ENCODE measurements at regions of chr20 and their contacts with region 1.

Region 1: GRCh38 chr20:56554869-56555268 is 21.8 kb downstream of the FAM209B start:
- DNase-seq: peak in 5 of 10 donors; percentile 17 to 72 (median 25)

Region 2: DNA sequence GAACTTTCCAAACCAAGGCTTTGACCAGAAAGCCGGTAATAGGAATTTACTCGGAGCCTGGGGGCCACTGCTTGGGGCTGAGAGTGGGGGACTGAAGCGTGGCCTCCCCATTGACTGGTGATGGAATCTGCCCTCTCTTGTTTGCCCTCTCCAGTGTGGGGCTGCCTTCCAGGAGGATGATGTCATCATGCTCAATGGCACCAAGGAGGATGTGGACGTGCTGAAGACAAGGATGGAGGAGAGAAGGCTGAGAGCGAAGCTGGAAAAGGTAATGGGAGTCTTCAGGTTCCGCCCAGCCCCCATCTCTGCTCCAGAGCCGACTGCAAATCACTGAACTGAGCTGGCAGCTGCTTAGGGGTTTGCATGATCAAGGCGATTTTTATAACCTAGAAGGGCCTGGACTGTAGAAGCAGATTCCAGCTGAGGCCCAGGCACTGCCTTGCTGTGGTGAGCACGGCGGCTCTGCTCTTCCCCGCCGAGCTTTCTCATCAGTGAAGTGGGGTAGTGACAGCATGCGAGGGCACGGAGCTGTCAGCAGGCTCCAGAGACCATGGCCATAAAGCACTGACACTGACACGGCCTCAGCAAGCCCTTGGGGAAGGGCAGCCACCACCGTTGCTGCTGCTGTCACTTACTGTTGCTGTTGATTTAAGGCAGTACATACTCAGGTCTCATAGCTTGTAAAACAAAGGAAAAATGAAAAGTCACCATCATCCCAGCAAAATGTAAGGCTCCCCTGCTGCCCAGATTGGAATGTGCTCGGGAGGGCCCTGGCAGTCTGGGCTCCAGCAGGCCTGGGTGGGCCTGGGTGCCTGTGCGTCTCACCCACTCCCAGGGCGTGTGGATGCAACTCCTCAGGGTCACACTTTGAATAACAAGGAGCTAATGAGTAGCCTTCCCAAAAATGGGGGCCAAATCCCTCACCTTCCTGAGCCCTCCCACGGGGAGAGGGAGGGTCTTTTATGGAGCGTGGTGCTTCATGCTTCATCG is 41.4 kb before region 1 on chr20:
- intact Hi-C with region 1: no loop called
- DNase-seq: peak in 1 of 10 donors; percentile 73

Region 3: GRCh38 chr20:56974499-56975236 is 419.8 kb after region 1 on chr20:
- intact Hi-C with region 1: loop called (anchors 2 kb)
- DNase-seq: peak in 5 of 10 donors; percentile 28 to 46 (median 34)

Region 4: DNA sequence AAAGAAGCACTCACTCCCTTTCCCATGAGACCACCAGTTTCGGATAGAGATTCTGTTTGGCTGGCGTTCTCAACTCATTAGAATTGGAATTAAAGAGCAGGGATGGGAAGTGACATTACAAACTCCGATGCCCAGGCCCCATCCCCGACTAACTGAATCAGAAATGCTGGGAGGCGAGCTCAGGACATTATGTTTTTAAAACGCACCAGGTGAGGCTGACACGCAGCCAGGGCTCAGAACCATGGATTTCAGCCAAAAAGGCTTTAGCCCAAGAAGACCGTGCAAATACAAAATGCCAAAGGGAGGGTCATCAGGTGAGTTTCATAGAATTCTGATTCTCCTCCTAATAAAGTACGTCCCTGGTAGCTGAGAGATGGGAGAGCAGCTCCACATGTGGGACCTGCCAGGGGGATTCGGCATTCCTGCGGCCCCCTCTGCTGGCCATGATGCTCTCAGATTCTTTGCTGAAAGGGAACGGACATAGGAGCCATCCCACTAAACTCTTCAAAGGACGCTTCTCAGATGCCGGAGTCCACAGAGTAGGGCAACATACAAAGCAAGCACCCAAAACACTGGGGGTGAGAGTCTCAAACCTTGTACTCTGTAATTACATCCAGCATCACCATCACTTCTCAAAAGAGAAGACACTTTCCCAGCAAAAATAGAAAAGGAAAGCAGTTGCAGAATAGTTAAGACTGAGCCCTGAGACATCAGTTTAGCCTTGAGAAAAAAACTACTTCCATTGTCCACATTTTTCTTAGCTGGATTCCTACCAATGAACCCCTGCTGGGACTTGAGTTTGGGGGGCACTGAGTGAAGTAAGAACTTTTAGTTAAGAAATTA is 506.4 kb after region 1 on chr20:
- intact Hi-C with region 1: loop called (anchors 5 kb)
- DNase-seq: peak in 5 of 10 donors; percentile 29 to 84 (median 40)

Measured in posterior cingulate gyrus (tissue), 11 donors.